K562 (cell line): ENCODE measurements at regions of chr17 and their contacts with region 1.

Region 1: DNA sequence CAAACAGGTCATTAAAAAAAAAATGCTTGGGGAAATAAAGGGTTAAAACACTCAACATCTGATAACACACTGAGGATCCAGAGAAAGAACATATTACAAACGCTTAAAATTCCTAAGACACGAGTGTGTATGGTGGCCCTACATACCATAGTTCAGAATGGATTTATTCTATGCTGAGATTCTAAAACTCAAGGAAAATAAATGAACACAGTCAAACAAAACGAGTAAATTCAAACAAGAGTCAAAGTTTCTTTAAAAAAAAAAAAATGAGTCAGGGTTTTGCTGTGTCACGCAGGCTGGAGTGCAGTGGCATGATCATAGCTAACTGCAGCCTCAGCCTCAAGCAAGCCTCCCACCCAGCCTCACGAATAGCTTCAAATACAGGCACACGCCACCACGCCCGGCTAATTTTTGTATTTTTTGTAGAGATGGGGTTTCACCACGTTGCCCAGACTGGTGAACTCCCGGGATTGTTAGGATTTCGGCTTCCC is 17.4 kb downstream of the CRK start:
- DNase-seq: peak in 1 of 4 experiments; percentile 56
- ATAC-seq: peak; percentile 80
- H3K4me3 ChIP-seq: no peak overlapping the region
- H3K27ac ChIP-seq: peak overlapping the region; percentile 42; the same call in 1 of the 3 replicates
- H3K4me1 ChIP-seq: peaks cover 0 to 6% of the 10 kb centered on the region in 2 experiments; a peak in 3 of 5 replicates
- H3K27me3 ChIP-seq: no peaks in the 10 kb centered on the region
- CTCF ChIP-seq: no peak
- EP300 ChIP-seq: no peak
- POLR2A ChIP-seq: no peak
- RAD21 ChIP-seq: no peak

Region 2: DNA sequence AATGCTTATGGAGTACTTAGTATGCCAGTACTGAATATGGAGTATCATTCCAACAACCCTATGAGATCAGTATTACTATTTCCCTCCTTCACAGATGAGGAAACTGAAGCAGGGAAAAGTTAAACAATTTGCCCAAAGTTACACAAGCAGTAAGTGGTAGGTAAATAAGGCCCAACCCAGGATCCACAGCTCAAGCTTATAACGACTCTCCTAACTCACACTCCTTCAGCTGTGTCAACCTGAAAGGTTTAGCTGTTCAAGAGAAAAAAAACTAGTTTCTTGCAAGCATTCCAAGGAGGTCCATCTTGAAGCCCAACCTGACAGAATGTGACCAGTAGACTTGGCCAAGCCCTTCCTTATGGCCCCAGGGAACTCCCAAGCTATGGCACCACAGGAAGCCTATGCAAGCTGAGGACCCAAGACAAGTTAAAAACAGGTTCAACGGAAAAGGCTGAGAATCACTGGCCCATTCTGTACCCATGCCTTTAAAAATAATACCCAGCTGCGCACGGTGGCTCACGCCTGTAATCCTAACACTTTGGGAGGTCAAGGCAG is 10.9 kb after region 1 on chr17:
- CTCF ChIA-PET with region 1: no interaction called
- POLR2A ChIA-PET with region 1: interaction called, 10 read pairs
- in situ Hi-C with region 1: no loop called
- intact Hi-C with region 1: no loop called
- DNase-seq: no peak
- ATAC-seq: no peak
- H3K4me3 ChIP-seq: no peak overlapping the region
- H3K27ac ChIP-seq: no peak overlapping the region
- H3K4me1 ChIP-seq: peaks cover 0 to 5% of the 10 kb centered on the region in 2 experiments; a peak in 4 of 5 replicates
- H3K27me3 ChIP-seq: no peaks in the 10 kb centered on the region
- CTCF ChIP-seq: no peak
- EP300 ChIP-seq: no peak
- POLR2A ChIP-seq: no peak
- RAD21 ChIP-seq: no peak

Region 3: DNA sequence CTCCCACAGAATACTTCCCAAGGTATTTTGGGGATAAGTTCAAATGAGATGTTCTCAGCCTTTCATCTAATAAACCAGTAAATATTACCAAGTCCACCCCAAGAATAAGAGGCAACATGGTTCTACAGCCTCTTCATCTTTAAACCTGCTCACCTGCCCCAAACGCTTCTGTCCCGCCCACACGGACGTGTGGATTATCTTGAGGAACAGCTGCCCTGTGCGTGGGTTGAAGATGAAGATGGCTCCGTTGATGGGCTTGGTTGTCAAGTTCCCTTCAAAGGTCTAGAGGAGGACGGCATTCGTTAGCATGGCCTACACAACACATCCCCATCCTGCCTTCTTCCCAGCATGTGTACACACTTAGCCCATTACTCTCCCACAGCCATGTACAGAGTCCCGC is 219.5 kb after region 1 on chr17:
- CTCF ChIA-PET with region 1: no interaction called
- POLR2A ChIA-PET with region 1: no interaction called
- in situ Hi-C with region 1: no loop called
- intact Hi-C with region 1: no loop called
- DNase-seq: peak in 1 of 4 experiments; percentile 42
- ATAC-seq: no peak
- H3K4me3 ChIP-seq: no peak overlapping the region
- H3K27ac ChIP-seq: no peak overlapping the region; the same call in 2 of the 3 replicates
- H3K4me1 ChIP-seq: no peaks in the 10 kb centered on the region; a peak in 1 of 5 replicates
- H3K27me3 ChIP-seq: no peaks in the 10 kb centered on the region
- CTCF ChIP-seq: no peak
- EP300 ChIP-seq: no peak
- POLR2A ChIP-seq: no peak
- RAD21 ChIP-seq: no peak